ENCODE measurements at regions of chr2 and their contacts with region 1.

Region 1: GRCh38 chr2:44244129-44244871 is 31.0 kb upstream of the SLC3A1 start:
- DNase-seq: peak; percentile 36
- H3K4me3 Mint-ChIP-seq: peak overlapping the region; percentile 55
- H3K27ac Mint-ChIP-seq: no peak overlapping the region
- H3K4me1 Mint-ChIP-seq: peaks cover 5% of the 10 kb centered on the region
- H3K27me3 Mint-ChIP-seq: no peaks in the 10 kb centered on the region

Region 2: GRCh38 chr2:44342854-44343253 is 98.6 kb after region 1 on chr2:
- intact Hi-C with region 1: loop called (anchors 2 kb)
- DNase-seq: no peak
- H3K4me3 Mint-ChIP-seq: no peak overlapping the region
- H3K27ac Mint-ChIP-seq: no peak overlapping the region
- H3K4me1 Mint-ChIP-seq: no peaks in the 10 kb centered on the region
- H3K27me3 Mint-ChIP-seq: no peaks in the 10 kb centered on the region

Measured in activated T-helper 2 cell treated with anti-CD3 and anti-CD28 coated beads, Interferon-gamma antibody, Interleukin-2, Interleukin-4, amounts not matched to agents 10 μg/mL and 5 μg/mL and 100 μg/mL, durations not matched to agents 14 hours and 24 hours and 36 hours (primary cell).